HepG2 (cell line): ENCODE measurements at regions of chr10 and their contacts with region 1.

Region 1: GRCh38 chr10:119416855-119417254 is 125.7 kb downstream of the RGS10 start:
- DNase-seq: peak; percentile 46
- ATAC-seq: peak; percentile 80
- H3K4me3 ChIP-seq: no peak overlapping the region
- H3K27ac ChIP-seq: no peak overlapping the region
- H3K4me1 ChIP-seq: peaks cover 16% of the 10 kb centered on the region
- H3K27me3 ChIP-seq: no peaks in the 10 kb centered on the region
- CTCF ChIP-seq: peak; percentile 97
- EP300 ChIP-seq: no peak
- POLR2A ChIP-seq: no peak
- RAD21 ChIP-seq: peak; percentile 93

Region 2: DNA sequence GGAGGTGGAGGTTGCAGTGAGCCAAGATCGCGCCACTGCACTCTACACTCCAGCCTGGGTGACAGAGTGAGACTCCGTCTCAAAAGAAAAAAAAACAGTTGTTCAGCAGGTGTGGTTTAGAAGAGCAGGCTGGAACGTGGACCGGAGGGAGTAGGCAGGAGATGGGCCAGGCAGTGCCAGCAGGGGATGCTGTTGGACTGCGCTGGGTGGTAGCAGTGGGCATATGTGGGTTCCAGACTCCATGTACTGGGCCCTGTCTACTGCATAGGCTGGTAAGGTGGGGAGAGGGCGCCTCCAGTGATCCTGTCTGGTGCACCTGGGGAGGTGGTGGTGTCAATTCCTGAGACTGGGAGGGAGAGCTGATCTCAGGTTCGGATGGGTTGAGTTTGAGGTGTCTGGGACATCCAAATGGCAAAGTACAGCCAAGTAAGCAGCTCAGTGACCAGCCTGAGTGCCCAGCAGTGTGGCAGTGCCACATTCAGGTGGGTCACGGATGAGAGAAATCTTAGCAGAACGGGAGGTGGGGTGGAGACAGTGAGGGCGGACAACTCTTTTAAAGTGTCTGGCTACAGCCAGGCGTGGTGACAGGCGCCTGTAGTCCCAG is 277.3 kb before region 1 on chr10:
- CTCF ChIA-PET with region 1: no interaction called
- POLR2A ChIA-PET with region 1: no interaction called
- in situ Hi-C with region 1: no loop called
- intact Hi-C with region 1: loop called (anchors 1 kb)
- DNase-seq: peak; percentile 28
- ATAC-seq: peak; percentile 89
- H3K4me3 ChIP-seq: no peak overlapping the region
- H3K27ac ChIP-seq: no peak overlapping the region
- H3K4me1 ChIP-seq: no peaks in the 10 kb centered on the region
- H3K27me3 ChIP-seq: no peaks in the 10 kb centered on the region
- CTCF ChIP-seq: peak; percentile 88
- EP300 ChIP-seq: no peak
- POLR2A ChIP-seq: no peak
- RAD21 ChIP-seq: peak; percentile 75; the same call in 1 of the 2 replicates